ENCODE measurements at regions of chr1 and their contacts with region 1.

Region 1: GRCh38 chr1:243343970-243344937 is 88.4 kb downstream of the SDCCAG8 start:
- DNase-seq: no peak
- H3K4me3 Mint-ChIP-seq: no peak overlapping the region
- H3K27ac Mint-ChIP-seq: no peak overlapping the region
- H3K4me1 Mint-ChIP-seq: peaks cover 2% of the 10 kb centered on the region
- H3K27me3 Mint-ChIP-seq: no peaks in the 10 kb centered on the region

Region 2: GRCh38 chr1:242689378-242689986 is 654.8 kb before region 1 on chr1:
- intact Hi-C with region 1: no loop called
- DNase-seq: no peak
- H3K4me3 Mint-ChIP-seq: no peak overlapping the region
- H3K27ac Mint-ChIP-seq: no peak overlapping the region
- H3K4me1 Mint-ChIP-seq: no peaks in the 10 kb centered on the region
- H3K27me3 Mint-ChIP-seq: no peaks in the 10 kb centered on the region

Region 3: GRCh38 chr1:243409284-243409683 is 65.0 kb after region 1 on chr1:
- intact Hi-C with region 1: loop called (anchors 1 kb)
- DNase-seq: no peak
- H3K4me3 Mint-ChIP-seq: no peak overlapping the region
- H3K27ac Mint-ChIP-seq: no peak overlapping the region
- H3K4me1 Mint-ChIP-seq: peaks cover 23% of the 10 kb centered on the region
- H3K27me3 Mint-ChIP-seq: no peaks in the 10 kb centered on the region

Region 4: GRCh38 chr1:243482141-243483022 is 138.1 kb after region 1 on chr1:
- intact Hi-C with region 1: loop called (anchors 5 kb)
- DNase-seq: no peak
- H3K4me3 Mint-ChIP-seq: peak overlapping the region; percentile 26
- H3K27ac Mint-ChIP-seq: no peak overlapping the region
- H3K4me1 Mint-ChIP-seq: peaks cover 14% of the 10 kb centered on the region
- H3K27me3 Mint-ChIP-seq: no peaks in the 10 kb centered on the region

Region 5: DNA sequence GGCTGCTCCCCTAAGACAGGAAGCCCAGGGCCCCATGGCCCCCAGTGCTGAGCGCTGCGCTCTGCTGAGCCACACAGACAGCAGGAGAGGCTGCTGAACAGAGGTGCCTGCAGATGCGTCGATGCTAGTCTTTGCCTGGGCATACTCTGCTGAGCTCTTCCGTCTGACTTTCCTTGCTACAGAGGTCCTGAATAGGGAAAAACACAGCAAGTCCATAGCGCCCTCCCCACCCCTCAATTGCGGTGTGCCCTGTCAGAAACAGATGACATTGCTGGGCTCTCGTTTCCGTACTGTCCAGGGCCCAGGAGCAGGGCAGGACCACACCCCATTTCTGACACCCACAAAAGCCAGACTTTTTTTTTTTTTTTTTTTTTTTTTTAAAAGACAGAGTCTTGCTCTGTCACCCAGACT is 164.1 kb after region 1 on chr1:
- intact Hi-C with region 1: no loop called
- DNase-seq: no peak
- H3K4me3 Mint-ChIP-seq: no peak overlapping the region
- H3K27ac Mint-ChIP-seq: no peak overlapping the region
- H3K4me1 Mint-ChIP-seq: peaks cover 16% of the 10 kb centered on the region
- H3K27me3 Mint-ChIP-seq: no peaks in the 10 kb centered on the region

Region 6: DNA sequence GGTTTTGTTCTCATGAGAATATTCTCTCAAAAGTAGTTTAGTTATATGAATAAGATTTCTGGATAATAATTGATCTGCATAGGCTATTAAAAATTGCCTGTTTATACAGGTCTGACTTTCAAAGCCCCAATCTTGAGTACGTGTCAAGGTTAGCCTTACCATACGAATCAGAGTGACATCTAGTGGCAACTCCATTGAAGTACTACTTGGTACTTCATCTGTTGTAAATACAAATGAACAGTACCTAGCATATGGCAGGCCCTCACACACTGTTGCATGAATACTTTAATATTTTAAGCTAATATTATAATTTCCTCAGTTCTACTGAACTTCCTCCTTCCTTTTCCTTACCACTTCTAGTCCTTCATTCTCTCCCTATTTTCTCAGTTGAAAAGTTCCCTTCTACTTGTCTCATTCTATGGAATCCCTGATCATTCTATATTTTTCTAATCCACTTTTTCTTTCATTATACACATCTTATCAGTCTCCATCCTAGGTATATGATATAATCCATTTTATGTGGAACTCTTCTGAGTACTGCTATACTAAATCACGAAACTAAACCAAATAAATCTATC is 404.5 kb after region 1 on chr1:
- intact Hi-C with region 1: loop called (anchors 1 kb)
- DNase-seq: no peak
- H3K4me3 Mint-ChIP-seq: no peak overlapping the region
- H3K27ac Mint-ChIP-seq: no peak overlapping the region
- H3K4me1 Mint-ChIP-seq: no peaks in the 10 kb centered on the region
- H3K27me3 Mint-ChIP-seq: no peaks in the 10 kb centered on the region

Region 7: GRCh38 chr1:243946946-243947345 is 602.7 kb after region 1 on chr1:
- intact Hi-C with region 1: loop called (anchors 1 kb)
- DNase-seq: no peak
- H3K4me3 Mint-ChIP-seq: no peak overlapping the region
- H3K27ac Mint-ChIP-seq: no peak overlapping the region
- H3K4me1 Mint-ChIP-seq: peaks cover 2% of the 10 kb centered on the region
- H3K27me3 Mint-ChIP-seq: no peaks in the 10 kb centered on the region

Region 8: DNA sequence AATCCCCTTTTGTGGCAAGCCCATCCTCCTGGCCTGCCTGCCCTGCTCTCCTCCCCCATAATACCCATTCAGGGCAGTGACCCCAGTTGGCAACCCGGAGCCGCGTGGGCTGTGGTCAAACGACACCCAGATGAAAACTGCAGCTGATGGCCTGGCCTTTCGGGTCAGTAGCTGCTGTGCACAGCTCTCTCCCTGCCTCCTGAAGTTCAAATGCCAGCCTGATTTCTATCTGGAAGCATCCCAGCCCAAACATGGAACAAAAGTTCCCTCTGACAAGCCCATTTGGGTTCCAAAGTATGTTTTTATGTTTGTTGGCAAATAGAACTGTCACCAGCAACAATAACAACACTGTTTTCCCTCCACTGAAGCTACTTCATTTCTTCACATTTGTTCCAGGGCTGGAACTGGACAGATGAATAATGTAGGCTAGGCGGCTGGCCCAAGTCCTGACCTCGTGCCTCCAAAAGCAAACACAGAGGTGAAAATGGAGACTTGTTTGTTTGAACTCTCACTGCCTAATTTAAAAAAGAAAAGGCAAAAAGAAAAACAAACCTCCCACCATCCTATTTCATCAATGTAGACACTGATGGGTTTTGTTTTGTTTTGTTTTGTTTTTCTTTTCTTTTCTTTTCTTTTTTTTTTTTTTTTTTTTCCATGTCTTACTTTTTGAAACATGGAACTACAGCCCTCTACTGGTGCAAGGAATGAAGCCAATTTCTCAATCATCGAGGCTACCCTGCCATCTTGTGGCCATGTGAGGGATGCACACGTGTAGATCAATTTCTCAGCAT is 928.4 kb after region 1 on chr1:
- intact Hi-C with region 1: loop called (anchors 1 kb)
- DNase-seq: peak; percentile 48
- H3K4me3 Mint-ChIP-seq: no peak overlapping the region
- H3K27ac Mint-ChIP-seq: no peak overlapping the region
- H3K4me1 Mint-ChIP-seq: peaks cover 6% of the 10 kb centered on the region
- H3K27me3 Mint-ChIP-seq: peaks cover 4% of the 10 kb centered on the region